Esophagus muscularis mucosa (tissue), 4 donors: ENCODE measurements at regions of chr13 and their contacts with region 1.

Region 1: GRCh38 chr13:21476893-21477472 is 17.9 kb upstream of the ZDHHC20 start:
- DNase-seq: no peak
- H3K4me3 ChIP-seq: peak overlapping the region; percentile 41 to 47 (median 44)
- H3K27ac ChIP-seq: peak overlapping the region in 1 of 4 donors; percentile 45
- H3K4me1 ChIP-seq: peaks cover 0 to 20% (median 17%) of the 10 kb centered on the region in 4 donors
- H3K27me3 ChIP-seq: no peaks in the 10 kb centered on the region
- CTCF ChIP-seq: peak; percentile 76 to 92 (median 84)
- EP300 ChIP-seq: no peak
- POLR2A ChIP-seq: no peak

Region 2: GRCh38 chr13:21111546-21111945 is 365.4 kb before region 1 on chr13:
- intact Hi-C with region 1: loop called (anchors 5 kb)
- DNase-seq: no peak
- H3K4me3 ChIP-seq: no peak overlapping the region
- H3K27ac ChIP-seq: no peak overlapping the region
- H3K4me1 ChIP-seq: no peaks in the 10 kb centered on the region
- H3K27me3 ChIP-seq: no peaks in the 10 kb centered on the region
- CTCF ChIP-seq: no peak
- EP300 ChIP-seq: no peak
- POLR2A ChIP-seq: no peak

Region 3: DNA sequence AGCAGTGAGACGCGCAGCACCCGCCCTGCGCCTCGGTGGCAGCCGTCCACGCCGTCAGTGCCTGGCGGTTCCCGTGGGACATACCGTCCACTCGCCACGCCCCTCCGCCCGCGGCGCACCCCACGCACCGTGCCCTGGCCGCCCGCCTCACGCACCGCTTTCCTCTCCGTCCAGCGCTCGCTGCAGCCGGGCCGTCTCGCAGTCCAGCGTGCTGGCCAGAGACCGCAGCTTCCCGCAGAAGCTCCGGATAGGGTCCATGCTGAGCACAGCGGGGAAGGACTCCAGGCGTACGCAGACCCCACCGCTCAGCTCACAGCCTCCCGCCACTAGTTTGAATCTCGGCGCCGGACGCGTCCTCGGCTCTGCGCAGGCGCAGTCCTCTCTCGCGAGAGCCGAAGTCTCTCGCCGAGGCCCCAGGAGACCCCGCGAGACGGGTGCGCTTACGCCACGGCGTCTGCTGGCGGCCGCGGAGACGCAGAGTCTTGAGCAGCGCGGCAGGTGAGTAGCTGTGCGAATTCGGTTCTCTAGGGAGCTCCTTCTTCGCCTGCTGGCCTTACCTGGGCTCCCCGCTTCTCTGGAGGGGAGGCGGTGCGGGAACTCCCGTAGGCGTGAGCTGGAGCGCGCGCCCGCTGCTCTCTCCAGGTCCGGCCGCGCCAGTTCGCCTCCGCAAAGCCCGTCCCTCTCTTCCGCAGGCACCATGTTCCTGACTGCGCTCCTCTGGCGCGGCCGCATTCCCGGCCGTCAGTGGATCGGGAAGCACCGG is 300.6 kb before region 1 on chr13 and contains the starts of genes MRPL57 and SKA3:
- intact Hi-C with region 1: loop called (anchors 5 kb)
- DNase-seq: peak; percentile 94
- H3K4me3 ChIP-seq: peak within 1 kb of the TSS; percentile 76 to 91 (median 89)
- H3K27ac ChIP-seq: peak within 1 kb of the TSS; percentile 94 to 98 (median 95)
- H3K4me1 ChIP-seq: peaks cover 11 to 27% (median 21%) of the 10 kb centered on the region in 4 donors
- H3K27me3 ChIP-seq: no peaks in the 10 kb centered on the region
- CTCF ChIP-seq: peak in 2 of 3 experiments; percentile 34
- EP300 ChIP-seq: no peak
- POLR2A ChIP-seq: peak; percentile 42
- total RNA-seq, gene MRPL57: 28.0 to 48.2 (median 32.1) TPM
- total RNA-seq, gene SKA3: 0.23 to 0.83 (median 0.66) TPM in 3 of 4 donors, not detected in the other

Region 4: GRCh38 chr13:21297914-21298831 is 178.8 kb before region 1 on chr13:
- intact Hi-C with region 1: loop called (anchors 2 kb)
- DNase-seq: peak; percentile 92
- H3K4me3 ChIP-seq: peak overlapping the region; percentile 83 to 89 (median 86)
- H3K27ac ChIP-seq: peak overlapping the region; percentile 68 to 82 (median 76)
- H3K4me1 ChIP-seq: peaks cover 14 to 29% (median 24%) of the 10 kb centered on the region in 4 donors
- H3K27me3 ChIP-seq: no peaks in the 10 kb centered on the region
- CTCF ChIP-seq: peak; percentile 90 to 97 (median 97)
- EP300 ChIP-seq: no peak
- POLR2A ChIP-seq: no peak

Region 5: GRCh38 chr13:21703824-21704499 is 227.0 kb after region 1 on chr13:
- intact Hi-C with region 1: no loop called
- DNase-seq: no peak
- H3K4me3 ChIP-seq: no peak overlapping the region
- H3K27ac ChIP-seq: no peak overlapping the region
- H3K4me1 ChIP-seq: peaks cover 0 to 6% (median 0%) of the 10 kb centered on the region in 4 donors
- H3K27me3 ChIP-seq: peaks cover 0 to 5% (median 0%) of the 10 kb centered on the region in 4 donors
- CTCF ChIP-seq: no peak
- EP300 ChIP-seq: no peak
- POLR2A ChIP-seq: no peak

Region 6: DNA sequence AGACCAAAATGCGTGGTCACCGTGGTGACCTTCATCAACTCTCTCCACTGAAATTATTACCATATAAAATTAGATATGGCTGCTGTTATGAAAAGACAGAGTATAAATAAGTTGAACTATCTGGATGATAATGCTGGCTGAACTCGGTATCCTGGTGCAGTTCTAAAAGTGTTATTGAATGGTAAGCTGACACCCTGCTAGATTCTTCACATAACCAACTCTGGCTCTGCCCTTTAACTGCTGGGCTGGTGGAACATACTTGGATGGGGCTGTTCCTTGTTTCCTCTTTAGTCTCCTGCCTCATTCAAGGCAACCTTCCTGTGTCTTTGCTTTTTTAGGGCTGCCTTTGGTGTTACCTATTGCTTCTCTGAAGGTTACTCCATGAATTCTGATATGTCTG is 300.8 kb after region 1 on chr13:
- intact Hi-C with region 1: no loop called
- DNase-seq: no peak
- H3K4me3 ChIP-seq: no peak overlapping the region
- H3K27ac ChIP-seq: no peak overlapping the region
- H3K4me1 ChIP-seq: no peaks in the 10 kb centered on the region
- H3K27me3 ChIP-seq: no peaks in the 10 kb centered on the region
- CTCF ChIP-seq: no peak
- EP300 ChIP-seq: no peak
- POLR2A ChIP-seq: no peak